ENCODE measurements at regions of chr12 and their contacts with region 1.

Region 1: GRCh38 chr12:133080368-133081158 is at the start of gene ZNF140:
- DNase-seq: peak; percentile 95 to 98
- ATAC-seq: peak; percentile 85 to 91 (median 86)
- H3K4me3 ChIP-seq: peak within 1 kb of the TSS; percentile 99
- H3K27ac ChIP-seq: peak within 1 kb of the TSS; percentile 99
- H3K4me1 ChIP-seq: peaks cover 3% of the 10 kb centered on the region
- H3K27me3 ChIP-seq: no peaks in the 10 kb centered on the region
- CTCF ChIP-seq: peak; percentile 31
- total RNA-seq, gene ZNF140: 3.9 to 9.8 (median 7.5) TPM

Region 2: GRCh38 chr12:132828706-132829534 is 251.6 kb before region 1 on chr12 and contains the start of gene GOLGA3:
- intact Hi-C with region 1: loop called in 1 of 2 experiments (anchors 5 kb)
- DNase-seq: peak; percentile 94 to 97
- ATAC-seq: peak; percentile 97 to 99 (median 98)
- H3K4me3 ChIP-seq: peak within 1 kb of the TSS; percentile 96
- H3K27ac ChIP-seq: peak within 1 kb of the TSS; percentile 99
- H3K4me1 ChIP-seq: peaks cover 15% of the 10 kb centered on the region
- H3K27me3 ChIP-seq: no peaks in the 10 kb centered on the region
- CTCF ChIP-seq: no peak
- total RNA-seq, gene GOLGA3: 25.2 to 40.8 (median 31.5) TPM

Region 3: DNA sequence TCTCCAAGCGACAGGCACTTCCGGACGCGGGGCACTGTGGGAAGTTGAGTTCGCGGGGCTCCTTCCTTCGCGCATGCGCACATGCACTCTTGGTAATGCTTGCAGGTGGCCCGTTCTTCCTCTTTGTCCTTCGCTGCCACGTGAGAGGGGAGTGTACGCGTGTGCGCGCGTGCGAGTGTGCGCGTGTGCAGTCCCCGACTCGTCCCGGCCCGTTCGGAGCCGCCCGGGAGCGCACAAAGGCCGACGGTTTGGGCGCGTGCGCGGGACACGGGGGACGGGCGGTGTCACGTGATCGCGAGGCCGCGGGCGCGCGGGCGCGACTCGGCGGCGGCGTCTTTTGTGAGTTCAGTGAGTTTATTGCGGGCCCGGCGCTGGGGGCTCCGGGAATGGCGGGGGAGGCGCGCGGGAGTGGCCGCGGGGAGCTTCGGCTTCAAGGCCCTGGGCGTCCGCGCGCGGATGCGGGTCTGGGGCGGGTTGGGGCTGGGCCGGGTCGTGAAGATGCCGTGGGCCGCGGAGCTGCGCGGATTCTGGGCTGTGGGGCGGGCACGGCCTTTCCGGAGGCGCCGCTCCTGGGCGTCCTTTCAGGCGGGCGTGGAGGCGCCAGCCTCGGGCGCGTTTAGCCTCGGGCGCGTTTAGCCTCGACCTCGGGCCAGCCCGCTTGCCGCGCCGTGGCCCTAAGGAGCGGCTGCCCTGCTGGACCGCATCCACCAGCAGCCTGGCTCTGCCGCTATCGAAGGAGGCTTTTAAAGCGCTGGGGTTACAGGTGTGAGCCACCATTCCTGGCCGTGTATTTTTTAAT is 43.2 kb before region 1 on chr12 and contains the start of gene ZNF84:
- intact Hi-C with region 1: loop called (anchors 2 to 5 kb)
- DNase-seq: peak; percentile 97 to 98
- ATAC-seq: peak; percentile 98 to 99 (median 98)
- H3K4me3 ChIP-seq: peak within 1 kb of the TSS; percentile 78
- H3K27ac ChIP-seq: peak within 1 kb of the TSS; percentile 90
- H3K4me1 ChIP-seq: peaks cover 6% of the 10 kb centered on the region
- H3K27me3 ChIP-seq: no peaks in the 10 kb centered on the region
- CTCF ChIP-seq: no peak
- total RNA-seq, gene ZNF84: 9.0 to 11.5 (median 10.5) TPM